ENCODE measurements at regions of chr17 and their contacts with region 1.

Region 1: DNA sequence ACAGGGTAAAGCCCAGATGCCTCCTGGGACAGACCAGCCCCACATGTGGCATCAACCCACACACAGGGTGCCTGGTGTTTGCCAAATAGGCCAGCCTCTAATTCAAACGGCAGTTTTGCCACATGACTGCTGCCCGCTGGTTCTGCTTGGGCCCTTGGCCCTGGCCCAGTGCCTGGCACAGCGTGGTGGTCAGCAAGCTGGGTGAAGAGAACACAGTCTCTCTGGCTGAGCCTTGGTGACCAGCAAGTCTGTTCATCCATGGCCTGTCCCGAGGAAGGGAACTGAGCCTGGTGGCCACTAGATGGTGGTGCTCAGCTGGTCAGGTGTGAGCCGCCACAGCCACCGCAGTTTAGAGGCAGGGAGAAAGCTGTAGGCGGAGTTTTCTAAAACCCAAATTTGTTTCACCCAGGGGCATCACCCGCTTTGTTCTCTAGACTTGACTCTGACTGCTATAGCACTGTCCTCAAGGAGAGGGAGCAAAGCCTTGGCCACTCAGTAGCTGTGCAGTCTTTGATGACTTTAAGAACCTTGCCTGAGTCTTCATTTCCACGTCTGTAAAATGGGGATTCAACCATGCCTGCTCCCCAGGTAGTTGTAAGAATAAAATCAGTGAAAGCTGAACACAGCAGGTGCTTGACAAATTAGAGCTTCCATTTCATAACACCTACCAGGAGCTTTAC is 4.7 kb upstream of the GFAP start:
- DNase-seq: peak; percentile 76
- ATAC-seq: peak; percentile 84
- H3K4me3 Mint-ChIP-seq: no peak overlapping the region
- H3K27ac Mint-ChIP-seq: no peak overlapping the region
- H3K4me1 Mint-ChIP-seq: peaks cover 6% of the 10 kb centered on the region
- H3K27me3 Mint-ChIP-seq: peaks cover 11% of the 10 kb centered on the region

Region 2: GRCh38 chr17:44804302-44805089 is 115.5 kb before region 1 on chr17:
- CTCF ChIA-PET with region 1: no interaction called
- POLR2A ChIA-PET with region 1: no interaction called
- DNase-seq: no peak
- ATAC-seq: no peak
- H3K4me3 Mint-ChIP-seq: no peak overlapping the region
- H3K27ac Mint-ChIP-seq: no peak overlapping the region
- H3K4me1 Mint-ChIP-seq: no peaks in the 10 kb centered on the region
- H3K27me3 Mint-ChIP-seq: peaks cover 4% of the 10 kb centered on the region

Region 3: GRCh38 chr17:44887971-44888954 is 31.8 kb before region 1 on chr17:
- CTCF ChIA-PET with region 1: no interaction called
- POLR2A ChIA-PET with region 1: no interaction called
- DNase-seq: peak; percentile 52
- ATAC-seq: peak; percentile 80
- H3K4me3 Mint-ChIP-seq: no peak overlapping the region
- H3K27ac Mint-ChIP-seq: no peak overlapping the region
- H3K4me1 Mint-ChIP-seq: peaks cover 4% of the 10 kb centered on the region
- H3K27me3 Mint-ChIP-seq: no peaks in the 10 kb centered on the region

Region 4: DNA sequence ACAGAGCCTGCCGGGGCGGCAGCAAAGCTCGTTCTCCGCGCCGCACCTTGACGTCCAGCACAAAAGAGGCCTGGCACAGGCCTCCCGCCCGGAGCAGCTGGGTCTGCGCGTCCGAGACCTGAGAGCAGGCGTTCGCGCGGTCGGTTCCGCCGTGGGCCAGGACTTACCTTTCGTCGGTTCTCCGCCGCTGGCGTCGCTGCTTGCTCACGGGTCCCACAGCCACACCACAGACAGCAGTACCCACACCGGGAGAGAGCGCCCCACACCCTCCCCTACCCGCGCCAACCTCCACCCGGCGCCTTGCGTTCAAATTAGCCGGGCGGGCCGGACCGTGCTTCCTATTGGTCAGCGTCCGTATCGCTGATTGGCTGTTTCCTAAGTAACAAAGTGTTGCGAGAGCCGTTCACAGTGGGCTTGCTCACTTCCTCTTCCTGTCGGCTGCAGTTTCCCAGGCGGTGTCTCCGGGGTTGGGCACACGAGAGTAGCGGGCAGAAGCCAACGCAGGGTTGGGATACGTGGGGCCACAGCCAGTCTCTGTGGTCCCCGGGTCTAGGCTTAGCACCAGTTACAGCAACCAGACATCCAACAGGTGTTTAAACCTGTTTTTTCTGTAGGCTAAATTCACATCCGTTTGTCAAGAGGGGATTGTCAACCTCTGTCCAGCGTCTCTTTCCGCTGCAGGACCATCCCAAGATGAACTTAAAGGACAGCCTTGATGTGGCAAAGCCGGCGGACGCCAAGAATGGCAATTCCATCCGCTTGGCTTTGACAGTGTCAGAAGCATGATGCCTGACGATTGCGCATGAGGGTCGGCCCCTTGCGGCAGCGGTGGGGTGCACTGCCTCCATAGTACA is 27.7 kb after region 1 on chr17 and contains the start of gene KIF18B:
- CTCF ChIA-PET with region 1: interaction called, 5 read pairs
- POLR2A ChIA-PET with region 1: interaction called, 13 read pairs
- DNase-seq: peak; percentile 97
- ATAC-seq: peak; percentile 96
- H3K4me3 Mint-ChIP-seq: peak within 1 kb of the TSS; percentile 96
- H3K27ac Mint-ChIP-seq: peak within 1 kb of the TSS; percentile 96
- H3K4me1 Mint-ChIP-seq: peaks cover 45% of the 10 kb centered on the region
- H3K27me3 Mint-ChIP-seq: peaks cover 4% of the 10 kb centered on the region
- total RNA-seq, gene KIF18B: 104 to 113 TPM

Measured in activated CD8-positive, alpha-beta T cell treated with anti-CD3 and anti-CD28 coated beads, Interleukin-2, amount 10 ng/mL, durations not matched to agents 7 days and 5 days (primary cell).